ENCODE measurements at regions of chr12 and their contacts with region 1.

Region 1: GRCh38 chr12:62435303-62436163 is 31.1 kb upstream of the MON2 start:
- DNase-seq: peak; percentile 70
- H3K4me3 Mint-ChIP-seq: peak overlapping the region; percentile 85
- H3K27ac Mint-ChIP-seq: no peak overlapping the region
- H3K4me1 Mint-ChIP-seq: peaks cover 6% of the 10 kb centered on the region
- H3K27me3 Mint-ChIP-seq: peaks cover 26% of the 10 kb centered on the region
- CTCF ChIP-seq: no peak

Region 2: GRCh38 chr12:62282057-62282774 is 153.3 kb before region 1 on chr12:
- CTCF ChIA-PET with region 1: no interaction called
- intact Hi-C with region 1: no loop called
- DNase-seq: no peak
- H3K4me3 Mint-ChIP-seq: no peak overlapping the region
- H3K27ac Mint-ChIP-seq: no peak overlapping the region
- H3K4me1 Mint-ChIP-seq: peaks cover 15% of the 10 kb centered on the region
- H3K27me3 Mint-ChIP-seq: no peaks in the 10 kb centered on the region
- CTCF ChIP-seq: no peak

Region 3: GRCh38 chr12:62522984-62523383 is 87.5 kb after region 1 on chr12:
- CTCF ChIA-PET with region 1: interaction called, 3 read pairs
- intact Hi-C with region 1: loop called (anchors 5 kb)
- DNase-seq: no peak
- H3K4me3 Mint-ChIP-seq: no peak overlapping the region
- H3K27ac Mint-ChIP-seq: no peak overlapping the region
- H3K4me1 Mint-ChIP-seq: peaks cover 17% of the 10 kb centered on the region
- H3K27me3 Mint-ChIP-seq: no peaks in the 10 kb centered on the region
- CTCF ChIP-seq: no peak

Region 4: GRCh38 chr12:62581288-62582064 is 145.9 kb after region 1 on chr12:
- CTCF ChIA-PET with region 1: interaction called, 6 read pairs
- intact Hi-C with region 1: loop called (anchors 5 kb)
- DNase-seq: no peak
- H3K4me3 Mint-ChIP-seq: no peak overlapping the region
- H3K27ac Mint-ChIP-seq: no peak overlapping the region
- H3K4me1 Mint-ChIP-seq: no peaks in the 10 kb centered on the region
- H3K27me3 Mint-ChIP-seq: no peaks in the 10 kb centered on the region
- CTCF ChIP-seq: peak; percentile 27

Region 5: DNA sequence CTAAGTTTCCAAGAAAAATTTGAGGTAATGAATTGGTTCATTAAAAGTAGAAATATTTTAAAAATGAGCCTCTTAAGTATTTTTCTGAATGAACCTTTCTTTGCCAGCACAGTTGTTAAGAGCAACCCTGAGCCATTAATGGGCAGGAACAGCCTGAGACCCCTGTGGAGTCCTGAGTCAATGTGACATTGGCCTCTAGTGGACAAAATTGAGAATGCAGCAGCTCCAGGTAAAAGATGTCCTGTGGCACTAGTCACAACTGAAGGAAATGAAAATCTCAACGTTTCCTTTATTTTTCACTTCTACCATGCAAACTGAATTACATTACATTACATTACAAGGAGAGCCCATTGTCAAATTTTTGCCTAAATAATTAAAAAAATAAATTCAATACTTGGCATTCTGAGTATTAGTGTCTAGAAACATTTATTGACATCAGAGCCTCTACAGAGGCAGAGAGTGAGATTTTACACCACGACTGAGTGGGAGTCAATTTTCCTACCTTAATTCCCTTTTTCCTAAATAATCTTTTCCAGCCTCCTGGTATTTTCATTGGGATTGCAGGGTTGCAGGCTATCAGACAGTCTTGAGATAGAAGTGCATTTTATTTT is 363.7 kb after region 1 on chr12:
- CTCF ChIA-PET with region 1: interaction called, 6 read pairs
- intact Hi-C with region 1: loop called (anchors 1 kb)
- DNase-seq: peak; percentile 83
- H3K4me3 Mint-ChIP-seq: no peak overlapping the region
- H3K27ac Mint-ChIP-seq: peak overlapping the region; percentile 60
- H3K4me1 Mint-ChIP-seq: peaks cover 36% of the 10 kb centered on the region
- H3K27me3 Mint-ChIP-seq: no peaks in the 10 kb centered on the region
- CTCF ChIP-seq: peak; percentile 74

Measured in Calu3 (cell line).